Activated CD4-positive, alpha-beta T cell treated with anti-CD3 and anti-CD28 coated beads, Interleukin-2, amount 10 ng/mL, durations not matched to agents 24 days and 14 days (primary cell): ENCODE measurements at regions of chr15 and their contacts with region 1.

Region 1: GRCh38 chr15:52558196-52558595 is 10.6 kb downstream of the ARPP19 start:
- DNase-seq: peak; percentile 85
- H3K4me3 Mint-ChIP-seq: peak overlapping the region; percentile 36
- H3K27ac Mint-ChIP-seq: peak overlapping the region; percentile 86
- H3K4me1 Mint-ChIP-seq: peaks cover 54% of the 10 kb centered on the region
- H3K27me3 Mint-ChIP-seq: no peaks in the 10 kb centered on the region

Region 2: DNA sequence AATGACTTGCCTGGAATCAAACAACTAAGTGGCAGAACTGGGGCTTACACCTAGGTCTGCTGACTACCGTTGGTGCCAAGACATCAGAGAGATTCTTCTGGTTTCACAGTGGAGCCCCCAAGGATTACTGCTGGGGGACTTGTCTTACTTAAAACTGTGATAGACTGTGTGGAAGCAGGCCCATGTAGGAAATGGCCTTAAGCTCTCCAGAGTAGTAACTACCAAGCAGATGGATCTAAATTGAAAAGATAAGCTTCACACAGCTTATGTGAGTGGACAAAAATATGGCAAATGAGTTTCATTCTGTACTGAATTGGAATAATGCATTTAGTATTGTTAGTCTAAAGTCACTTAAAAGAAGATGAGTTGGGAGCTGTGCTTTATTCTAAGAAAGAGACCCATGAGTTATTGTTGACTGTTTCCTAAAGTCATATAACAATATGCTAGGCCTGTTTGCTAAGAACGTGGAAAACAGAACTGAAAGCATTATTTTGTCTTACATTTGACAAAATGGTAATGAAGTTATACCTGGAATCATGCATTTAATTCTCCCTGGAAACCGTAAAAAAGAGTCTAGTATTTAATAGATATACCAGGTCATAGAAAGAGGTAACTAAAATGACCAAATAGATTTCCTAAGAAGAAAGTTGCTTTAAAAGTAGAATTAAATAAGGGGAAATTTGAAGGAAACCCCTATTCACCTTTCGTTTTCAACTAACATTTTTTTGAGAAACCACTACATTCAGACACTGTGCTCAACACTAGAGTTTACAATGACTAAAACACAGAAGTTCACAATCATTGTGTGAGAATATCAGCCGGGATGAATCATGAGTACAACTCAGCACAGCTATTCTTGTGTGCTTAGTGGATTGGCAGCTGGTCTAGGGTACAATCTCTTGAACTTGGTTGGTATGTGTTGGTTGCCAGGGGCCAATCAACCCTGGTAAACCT is 552.2 kb before region 1 on chr15:
- intact Hi-C with region 1: loop called (anchors 2 kb)
- DNase-seq: peak; percentile 73
- H3K4me3 Mint-ChIP-seq: peak overlapping the region; percentile 51
- H3K27ac Mint-ChIP-seq: peak overlapping the region; percentile 82
- H3K4me1 Mint-ChIP-seq: peaks cover 57% of the 10 kb centered on the region
- H3K27me3 Mint-ChIP-seq: no peaks in the 10 kb centered on the region

Region 3: DNA sequence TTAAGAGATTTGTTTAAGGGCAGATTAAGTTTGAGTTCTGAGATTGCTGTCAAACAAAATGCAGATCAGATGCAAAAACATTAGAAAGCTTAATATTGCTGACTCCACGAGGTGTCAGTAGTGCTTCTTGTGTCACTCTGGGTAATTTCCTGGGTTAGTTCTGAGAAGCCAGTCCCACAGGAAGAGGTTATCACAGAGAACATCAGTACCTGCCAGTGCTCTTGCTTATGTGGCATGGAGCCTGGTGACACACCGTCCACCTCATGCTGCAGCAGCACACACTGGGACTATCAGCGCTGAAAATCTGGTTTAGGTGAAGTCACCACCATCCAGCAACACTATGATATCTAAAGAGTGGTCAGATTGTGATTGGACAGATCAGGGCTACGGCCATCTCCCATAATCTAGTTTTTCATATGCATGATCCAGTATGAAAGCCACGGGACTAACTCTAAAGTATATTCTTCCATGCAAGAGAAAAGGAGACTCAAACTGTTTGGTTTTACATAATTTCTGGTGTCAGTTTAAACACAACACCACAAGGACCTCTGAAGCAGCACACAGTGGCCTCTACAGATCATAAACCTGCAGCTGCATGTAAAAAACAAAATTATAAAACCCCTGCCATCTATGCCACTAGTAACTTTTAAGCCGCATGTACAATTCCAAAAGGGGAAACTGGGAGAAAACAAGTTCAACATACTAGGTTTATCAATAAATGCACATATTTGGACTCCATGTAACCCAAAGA is 226.5 kb before region 1 on chr15:
- intact Hi-C with region 1: loop called (anchors 1 kb)
- DNase-seq: peak; percentile 90
- H3K4me3 Mint-ChIP-seq: peak overlapping the region; percentile 56
- H3K27ac Mint-ChIP-seq: peak overlapping the region; percentile 49
- H3K4me1 Mint-ChIP-seq: peaks cover 24% of the 10 kb centered on the region
- H3K27me3 Mint-ChIP-seq: no peaks in the 10 kb centered on the region

Region 4: DNA sequence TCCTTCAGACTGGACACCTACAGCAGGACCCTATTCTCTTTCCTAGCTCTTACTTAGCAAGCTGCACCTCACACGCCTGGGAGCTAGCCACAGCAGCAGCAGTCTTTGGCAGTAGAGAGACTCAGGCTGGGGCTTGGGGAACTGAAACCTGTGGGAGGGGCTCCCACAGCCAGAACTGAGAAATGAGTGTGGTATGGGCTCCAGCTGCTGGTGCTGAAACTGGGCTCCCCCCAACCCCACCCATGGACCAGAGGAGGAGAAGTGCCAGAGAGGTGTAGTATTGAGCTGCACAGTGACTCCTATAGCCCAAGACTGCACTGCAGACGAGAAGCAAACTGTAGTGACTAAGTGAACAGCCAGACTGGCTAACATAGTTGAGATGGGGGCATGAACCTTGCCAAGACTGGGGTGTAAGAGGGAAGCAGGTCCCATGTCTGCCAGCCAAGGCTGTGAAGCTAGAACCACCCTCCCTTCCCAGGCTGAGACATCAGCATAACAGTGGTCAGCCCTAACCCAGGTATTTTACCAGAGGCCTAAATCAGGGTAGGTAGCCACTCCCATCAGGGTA is 92.0 kb before region 1 on chr15:
- intact Hi-C with region 1: loop called (anchors 2 kb)
- DNase-seq: peak; percentile 78
- H3K4me3 Mint-ChIP-seq: no peak overlapping the region
- H3K27ac Mint-ChIP-seq: no peak overlapping the region
- H3K4me1 Mint-ChIP-seq: peaks cover 29% of the 10 kb centered on the region
- H3K27me3 Mint-ChIP-seq: no peaks in the 10 kb centered on the region

Region 5: GRCh38 chr15:52523192-52523591 is 35.0 kb before region 1 on chr15:
- intact Hi-C with region 1: no loop called
- DNase-seq: no peak
- H3K4me3 Mint-ChIP-seq: no peak overlapping the region
- H3K27ac Mint-ChIP-seq: peak overlapping the region; percentile 21
- H3K4me1 Mint-ChIP-seq: peaks cover 33% of the 10 kb centered on the region
- H3K27me3 Mint-ChIP-seq: peaks cover 1% of the 10 kb centered on the region

Region 6: DNA sequence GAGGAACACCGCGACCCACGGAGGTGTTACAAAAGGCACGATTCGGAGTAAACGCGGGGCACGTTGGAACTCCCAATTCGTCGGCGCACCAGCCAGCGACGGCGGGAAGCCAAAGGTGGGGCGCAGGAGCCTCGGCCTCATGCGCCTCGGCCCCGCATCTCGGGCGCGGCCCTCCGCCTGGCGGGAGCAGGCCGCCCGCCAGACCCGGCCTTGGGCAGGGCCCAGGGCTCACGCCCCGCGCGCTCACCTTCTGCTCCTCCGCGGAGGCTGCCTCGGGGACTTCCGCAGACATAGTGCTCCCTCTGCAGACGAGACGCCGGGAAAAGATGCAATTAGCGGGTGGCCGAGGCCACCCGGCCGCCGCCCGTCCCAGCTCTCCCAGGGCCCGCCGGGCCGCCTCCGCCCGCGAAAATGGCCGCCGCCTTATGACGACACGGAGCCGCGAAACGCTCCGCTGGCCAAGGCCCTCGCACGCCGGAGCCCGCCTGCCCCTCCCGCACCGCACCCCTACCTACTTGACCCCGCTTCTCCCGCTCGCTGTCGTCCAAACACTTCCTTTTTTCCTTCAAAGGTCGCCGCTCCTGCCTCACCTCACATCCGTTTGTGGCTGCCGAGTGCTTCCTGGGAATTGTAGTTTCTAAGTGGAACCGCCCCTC is 10.5 kb after region 1 on chr15 and contains the start of gene ARPP19:
- intact Hi-C with region 1: loop called (anchors 1 kb)
- DNase-seq: peak; percentile 94
- H3K4me3 Mint-ChIP-seq: peak within 1 kb of the TSS; percentile 88
- H3K27ac Mint-ChIP-seq: peak within 1 kb of the TSS; percentile 99
- H3K4me1 Mint-ChIP-seq: peaks cover 29% of the 10 kb centered on the region
- H3K27me3 Mint-ChIP-seq: peaks cover 1% of the 10 kb centered on the region
- total RNA-seq, gene ARPP19: 191 and 215 TPM in 2 replicates

Region 7: GRCh38 chr15:52735231-52736089 is 177.3 kb after region 1 on chr15:
- intact Hi-C with region 1: loop called (anchors 10 kb)
- DNase-seq: peak; percentile 94
- H3K4me3 Mint-ChIP-seq: no peak overlapping the region
- H3K27ac Mint-ChIP-seq: peak overlapping the region; percentile 18
- H3K4me1 Mint-ChIP-seq: peaks cover 17% of the 10 kb centered on the region
- H3K27me3 Mint-ChIP-seq: peaks cover 8% of the 10 kb centered on the region

Region 8: DNA sequence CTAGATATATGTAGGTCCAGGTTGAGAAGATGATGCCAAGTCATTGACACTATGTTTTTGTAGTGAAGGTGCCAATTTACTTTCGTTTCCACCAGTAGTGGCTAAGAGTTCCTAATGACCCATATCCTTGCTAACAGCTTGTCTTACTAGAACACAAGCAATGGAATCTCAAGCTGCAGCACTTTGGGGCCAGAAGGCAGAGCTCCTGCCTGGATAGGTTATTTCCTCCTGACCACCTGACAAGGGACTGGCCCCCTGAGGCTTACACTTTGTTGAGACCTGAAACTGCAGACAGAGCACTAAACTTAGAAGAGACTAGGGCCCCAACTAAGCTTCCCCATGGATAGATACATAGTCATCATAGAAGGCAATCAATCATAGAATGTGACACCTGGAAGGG is 220.3 kb after region 1 on chr15:
- intact Hi-C with region 1: no loop called
- DNase-seq: no peak
- H3K4me3 Mint-ChIP-seq: no peak overlapping the region
- H3K27ac Mint-ChIP-seq: no peak overlapping the region
- H3K4me1 Mint-ChIP-seq: peaks cover 10% of the 10 kb centered on the region
- H3K27me3 Mint-ChIP-seq: peaks cover 63% of the 10 kb centered on the region